Sigmoid colon (tissue), 7 donors: ENCODE measurements at regions of chr18 and their contacts with region 1.

Region 1: GRCh38 chr18:74495581-74496507 is at the start of gene CNDP2:
- DNase-seq: peak; percentile 100
- H3K4me3 ChIP-seq: peak within 1 kb of the TSS; percentile 63 to 96 (median 84)
- H3K27ac ChIP-seq: peak within 1 kb of the TSS; percentile 87 to 92 (median 90)
- H3K4me1 ChIP-seq: peaks cover 0 to 18% (median 9%) of the 10 kb centered on the region in 4 donors
- H3K27me3 ChIP-seq: no peaks in the 10 kb centered on the region
- CTCF ChIP-seq: no peak
- EP300 ChIP-seq: no peak
- POLR2A ChIP-seq: peak; percentile 56 to 68
- total RNA-seq, gene CNDP2: 29.3 to 53.5 (median 46.4) TPM

Region 2: GRCh38 chr18:73793386-73793785 is 702.5 kb before region 1 on chr18:
- intact Hi-C with region 1: no loop called
- DNase-seq: no peak
- H3K4me3 ChIP-seq: no peak overlapping the region
- H3K27ac ChIP-seq: no peak overlapping the region
- H3K4me1 ChIP-seq: no peaks in the 10 kb centered on the region
- H3K27me3 ChIP-seq: no peaks in the 10 kb centered on the region
- CTCF ChIP-seq: no peak
- EP300 ChIP-seq: no peak
- POLR2A ChIP-seq: no peak

Region 3: GRCh38 chr18:74147779-74148542 is 347.9 kb before region 1 on chr18 and contains the starts of genes FBXO15 and TIMM21:
- intact Hi-C with region 1: loop called (anchors 1 kb)
- DNase-seq: peak; percentile 99
- H3K4me3 ChIP-seq: peak within 1 kb of the TSS; percentile 61 to 86 (median 70)
- H3K27ac ChIP-seq: peak within 1 kb of the TSS; percentile 90 to 99 (median 96)
- H3K4me1 ChIP-seq: peaks cover 0 to 45% (median 40%) of the 10 kb centered on the region in 4 donors
- H3K27me3 ChIP-seq: no peaks in the 10 kb centered on the region
- CTCF ChIP-seq: no peak
- EP300 ChIP-seq: peak in 2 of 4 donors; percentile 13 to 51
- POLR2A ChIP-seq: peak; percentile 44 to 53
- total RNA-seq, gene FBXO15: 0.36 to 2.2 TPM in 2 of 4 donors, not detected in the others
- total RNA-seq, gene TIMM21: 42.4 to 65.3 (median 52.1) TPM

Region 4: GRCh38 chr18:74196220-74197119 is 299.4 kb before region 1 on chr18:
- intact Hi-C with region 1: loop called (anchors 5 kb)
- DNase-seq: no peak
- H3K4me3 ChIP-seq: peak overlapping the region in 3 of 4 donors; percentile 2 to 34 (median 22)
- H3K27ac ChIP-seq: no peak overlapping the region
- H3K4me1 ChIP-seq: peaks cover 0 to 14% (median 6%) of the 10 kb centered on the region in 4 donors
- H3K27me3 ChIP-seq: peaks cover 0 to 6% (median 0%) of the 10 kb centered on the region in 3 donors
- CTCF ChIP-seq: peak; percentile 71 to 91 (median 86)
- EP300 ChIP-seq: no peak
- POLR2A ChIP-seq: no peak

Region 5: DNA sequence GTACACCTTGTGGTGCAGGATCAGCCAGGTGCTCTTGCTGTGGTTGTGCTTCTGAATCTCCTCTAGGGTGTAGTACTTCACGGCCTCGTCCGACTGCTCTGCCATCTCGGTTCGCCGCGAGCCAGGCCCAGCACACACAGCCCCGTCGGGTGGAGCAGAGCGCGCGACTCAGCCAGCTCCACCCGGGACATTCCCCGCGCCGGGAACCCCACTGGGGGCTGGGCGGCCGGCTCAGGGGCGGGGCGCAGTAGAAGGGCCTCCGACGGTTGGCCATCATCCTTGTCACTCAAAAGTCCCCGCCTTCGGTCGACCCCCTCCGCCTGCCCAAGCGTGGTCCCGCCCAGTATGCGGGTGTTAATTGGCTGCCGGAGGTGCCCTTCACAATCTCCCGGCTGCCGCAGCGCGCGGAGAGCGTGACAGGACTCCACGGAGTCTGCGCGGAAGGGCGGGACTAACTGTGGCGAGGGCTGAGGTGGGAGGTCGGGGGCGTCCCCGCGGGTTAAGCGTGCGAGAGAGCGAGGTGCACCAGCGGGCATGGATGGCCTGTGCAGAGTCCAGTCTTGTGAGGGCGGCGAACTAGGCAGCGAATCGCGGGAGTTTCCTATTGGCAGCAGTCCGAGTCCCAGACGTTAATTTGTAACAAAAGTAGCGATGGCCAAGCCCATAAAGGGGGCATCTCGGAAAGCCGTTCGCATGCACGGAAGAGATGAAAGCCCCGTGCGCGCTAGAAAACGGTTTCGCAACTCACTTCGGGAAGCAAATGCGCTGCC is 203.9 kb before region 1 on chr18 and contains the start of gene CYB5A:
- intact Hi-C with region 1: loop called (anchors 2 kb)
- DNase-seq: peak; percentile 99
- H3K4me3 ChIP-seq: peak within 1 kb of the TSS; percentile 71 to 94 (median 84)
- H3K27ac ChIP-seq: peak within 1 kb of the TSS; percentile 80 to 88 (median 84)
- H3K4me1 ChIP-seq: peaks cover 0 to 52% (median 44%) of the 10 kb centered on the region in 4 donors
- H3K27me3 ChIP-seq: no peaks in the 10 kb centered on the region
- CTCF ChIP-seq: no peak
- EP300 ChIP-seq: no peak
- POLR2A ChIP-seq: peak; percentile 36 to 53
- total RNA-seq, gene CYB5A: 137 to 533 (median 241) TPM

Region 6: GRCh38 chr18:74353169-74353775 is 142.6 kb before region 1 on chr18:
- intact Hi-C with region 1: loop called (anchors 1 kb)
- DNase-seq: peak; percentile 78
- H3K4me3 ChIP-seq: no peak overlapping the region
- H3K27ac ChIP-seq: no peak overlapping the region
- H3K4me1 ChIP-seq: no peaks in the 10 kb centered on the region
- H3K27me3 ChIP-seq: no peaks in the 10 kb centered on the region
- CTCF ChIP-seq: peak; percentile 65 to 77 (median 73)
- EP300 ChIP-seq: no peak
- POLR2A ChIP-seq: no peak

Region 7: GRCh38 chr18:74597662-74598349 is 102.0 kb after region 1 on chr18 and contains the start of gene ZNF407:
- intact Hi-C with region 1: loop called (anchors 2 kb)
- DNase-seq: peak; percentile 93
- H3K4me3 ChIP-seq: peak within 1 kb of the TSS; percentile 56 to 97 (median 78)
- H3K27ac ChIP-seq: peak within 1 kb of the TSS; percentile 92 to 99 (median 96)
- H3K4me1 ChIP-seq: peaks cover 0 to 41% (median 30%) of the 10 kb centered on the region in 4 donors
- H3K27me3 ChIP-seq: no peaks in the 10 kb centered on the region
- CTCF ChIP-seq: no peak
- EP300 ChIP-seq: no peak
- POLR2A ChIP-seq: peak in 1 of 2 donors; percentile 21
- total RNA-seq, gene ZNF407: 16.3 to 19.8 (median 18.1) TPM

Region 8: GRCh38 chr18:74652392-74652988 is 156.6 kb after region 1 on chr18:
- intact Hi-C with region 1: no loop called
- DNase-seq: no peak
- H3K4me3 ChIP-seq: no peak overlapping the region
- H3K27ac ChIP-seq: peak overlapping the region in 1 of 4 donors; percentile 46
- H3K4me1 ChIP-seq: peaks cover 0 to 25% (median 4%) of the 10 kb centered on the region in 4 donors
- H3K27me3 ChIP-seq: no peaks in the 10 kb centered on the region
- CTCF ChIP-seq: peak in 3 of 4 experiments; percentile 38 to 56 (median 55)
- EP300 ChIP-seq: no peak
- POLR2A ChIP-seq: no peak